CD8-positive, alpha-beta memory T cell (primary cell): ENCODE measurements at regions of chr1 and their contacts with region 1.

Region 1: DNA sequence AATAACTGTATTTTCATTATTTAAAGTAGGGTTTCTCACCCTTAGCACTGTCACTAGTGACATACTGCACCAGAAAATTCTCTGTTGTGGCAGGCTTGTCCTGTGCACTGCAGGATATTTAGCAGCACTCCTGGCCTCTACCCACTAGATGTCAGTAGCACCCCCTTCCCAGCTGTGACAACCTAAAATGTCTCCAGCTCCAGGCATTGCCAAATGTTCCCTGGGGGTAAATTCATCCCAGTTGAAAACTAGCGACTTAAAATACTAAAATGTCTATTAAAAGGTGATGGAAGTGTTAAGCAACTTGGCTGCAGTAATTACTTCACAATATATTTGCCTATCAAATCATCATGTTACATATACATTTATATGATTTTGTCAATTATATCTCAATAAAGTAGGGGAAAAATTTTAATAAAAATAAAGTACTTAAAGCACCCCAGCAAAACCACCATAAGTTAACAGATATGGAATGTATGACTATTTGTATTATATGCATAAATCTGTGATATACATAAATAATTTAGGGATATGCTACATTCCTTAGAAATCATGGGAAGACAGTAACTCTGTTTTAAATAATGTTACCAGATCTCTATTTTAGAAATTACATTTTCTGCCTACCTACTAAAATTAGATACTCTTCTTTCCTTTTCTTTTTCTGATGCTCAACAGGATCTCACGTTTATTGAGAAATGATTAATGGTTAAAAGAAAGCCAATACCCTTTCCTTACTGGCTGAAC is 74.6 kb downstream of the ARID4B start:
- DNase-seq: peak; percentile 33 to 76 (median 61)
- H3K4me3 ChIP-seq: no peak overlapping the region
- H3K4me3 Mint-ChIP-seq: no peak overlapping the region
- H3K27ac ChIP-seq: no peak overlapping the region
- H3K27ac Mint-ChIP-seq: peak overlapping the region in 5 of 8 donors; percentile 23 to 96 (median 68)
- H3K4me1 ChIP-seq: no peaks in the 10 kb centered on the region
- H3K4me1 Mint-ChIP-seq: peaks cover 39 to 62% (median 46%) of the 10 kb centered on the region in 3 donors
- H3K27me3 ChIP-seq: no peaks in the 10 kb centered on the region
- H3K27me3 Mint-ChIP-seq: no peaks in the 10 kb centered on the region

Region 2: DNA sequence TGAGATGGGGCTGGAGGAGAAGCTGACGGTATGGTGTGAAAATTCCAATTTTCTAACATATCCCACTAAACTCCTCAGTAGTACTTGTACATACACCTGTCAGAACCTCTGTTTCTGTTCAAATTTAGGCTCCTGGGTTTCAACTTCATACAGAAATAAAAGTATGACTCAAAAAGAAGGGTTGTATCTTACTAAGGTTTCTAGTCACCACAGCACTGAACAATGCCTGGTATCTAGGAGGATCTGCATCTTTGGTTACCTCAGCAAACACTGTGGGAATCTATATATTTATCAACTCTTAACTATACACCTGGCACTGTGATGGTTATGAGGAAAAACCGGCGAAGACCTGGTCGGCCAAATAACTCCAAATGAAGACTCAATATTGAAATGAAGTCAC is 106.1 kb before region 1 on chr1:
- CTCF ChIA-PET with region 1: no interaction called
- POLR2A ChIA-PET with region 1: no interaction called
- DNase-seq: no peak
- H3K4me3 ChIP-seq: no peak overlapping the region
- H3K4me3 Mint-ChIP-seq: no peak overlapping the region
- H3K27ac ChIP-seq: no peak overlapping the region
- H3K27ac Mint-ChIP-seq: peak overlapping the region in 2 of 8 donors; percentile 34 to 54
- H3K4me1 ChIP-seq: no peaks in the 10 kb centered on the region
- H3K4me1 Mint-ChIP-seq: peaks cover 21 to 53% (median 27%) of the 10 kb centered on the region in 3 donors
- H3K27me3 ChIP-seq: no peaks in the 10 kb centered on the region
- H3K27me3 Mint-ChIP-seq: no peaks in the 10 kb centered on the region

Region 3: GRCh38 chr1:235328357-235329138 is 75.2 kb after region 1 on chr1 and contains the start of gene GGPS1:
- CTCF ChIA-PET with region 1: interaction called, 10 read pairs
- POLR2A ChIA-PET with region 1: no interaction called
- DNase-seq: peak; percentile 95 to 99 (median 98)
- H3K4me3 ChIP-seq: peak within 1 kb of the TSS; percentile 89
- H3K4me3 Mint-ChIP-seq: no peak within 1 kb of the TSS
- H3K27ac ChIP-seq: peak within 1 kb of the TSS; percentile 93
- H3K27ac Mint-ChIP-seq: peak within 1 kb of the TSS in 4 of 8 donors; percentile 38 to 94 (median 82)
- H3K4me1 ChIP-seq: peaks cover 58% of the 10 kb centered on the region
- H3K4me1 Mint-ChIP-seq: peaks cover 28 to 37% (median 31%) of the 10 kb centered on the region in 3 donors
- H3K27me3 ChIP-seq: no peaks in the 10 kb centered on the region
- H3K27me3 Mint-ChIP-seq: peaks cover 0 to 4% of the 10 kb centered on the region in 2 donors
- total RNA-seq, gene GGPS1: 26.3 to 29.0 TPM